ENCODE measurements at regions of chr18 and their contacts with region 1.

Region 1: DNA sequence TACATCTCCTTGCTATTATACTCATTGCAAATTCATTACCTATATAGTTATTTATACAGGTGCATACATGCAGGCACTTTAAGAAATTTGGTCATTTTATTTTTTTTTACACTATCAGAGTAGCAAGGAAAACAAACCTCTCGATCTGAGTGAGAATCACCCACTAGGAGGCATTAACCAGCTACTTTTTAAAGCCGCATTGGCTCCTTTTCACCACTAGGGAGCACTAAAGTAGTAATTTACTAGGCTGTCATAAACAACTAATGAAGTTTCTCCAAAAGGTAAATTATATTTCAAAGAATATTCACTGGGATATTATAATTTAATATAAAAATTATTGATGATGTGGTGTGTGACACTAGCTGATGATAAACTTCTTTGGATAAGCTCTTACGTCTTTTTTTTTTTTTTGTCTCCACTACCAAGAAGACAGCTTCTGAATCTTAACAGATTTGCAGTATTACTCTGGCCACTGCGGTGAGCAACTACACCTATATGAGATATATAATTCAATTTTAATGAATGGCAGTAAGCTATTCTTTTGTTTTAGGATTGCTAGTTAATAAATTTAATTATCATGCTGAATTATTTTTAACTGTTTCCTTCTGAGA is 101.9 kb downstream of the NOL4 start:
- DNase-seq: peak; percentile 80
- H3K4me3 ChIP-seq: no peak overlapping the region
- H3K27ac ChIP-seq: no peak overlapping the region
- H3K4me1 ChIP-seq: peaks cover 76% of the 10 kb centered on the region
- H3K27me3 ChIP-seq: no peaks in the 10 kb centered on the region
- CTCF ChIP-seq: peak; percentile 99

Region 2: GRCh38 chr18:33751613-33752221 is 371.1 kb before region 1 on chr18:
- CTCF ChIA-PET with region 1: no interaction called
- POLR2A ChIA-PET with region 1: no interaction called
- intact Hi-C with region 1: loop called (anchors 5 kb)
- DNase-seq: peak; percentile 16
- H3K4me3 ChIP-seq: no peak overlapping the region
- H3K27ac ChIP-seq: no peak overlapping the region
- H3K4me1 ChIP-seq: no peaks in the 10 kb centered on the region
- H3K27me3 ChIP-seq: no peaks in the 10 kb centered on the region
- CTCF ChIP-seq: peak; percentile 65

Region 3: GRCh38 chr18:33839441-33840211 is 283.2 kb before region 1 on chr18:
- CTCF ChIA-PET with region 1: interaction called, 17 read pairs
- POLR2A ChIA-PET with region 1: no interaction called
- intact Hi-C with region 1: loop called (anchors 2 kb)
- DNase-seq: peak; percentile 84
- H3K4me3 ChIP-seq: no peak overlapping the region
- H3K27ac ChIP-seq: no peak overlapping the region
- H3K4me1 ChIP-seq: peaks cover 18% of the 10 kb centered on the region
- H3K27me3 ChIP-seq: no peaks in the 10 kb centered on the region
- CTCF ChIP-seq: peak; percentile 87

Region 4: DNA sequence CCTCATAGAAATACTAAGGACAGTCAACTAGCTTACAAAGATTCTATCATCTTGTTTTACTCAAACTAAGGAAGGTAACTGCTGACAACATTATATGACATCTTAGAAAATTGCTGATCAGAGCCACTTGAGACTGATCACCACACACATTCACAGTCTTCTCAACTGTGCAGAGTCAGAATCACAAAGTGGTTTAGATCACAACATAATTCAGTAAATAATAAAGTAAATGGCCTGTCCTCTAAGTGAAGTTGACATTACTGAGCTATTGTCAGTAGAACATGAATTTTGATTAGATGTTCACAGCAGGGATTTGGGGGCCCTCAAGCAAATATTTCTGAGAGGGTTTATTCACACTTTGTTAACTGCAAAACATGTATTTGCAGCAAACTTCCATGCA is 73.4 kb after region 1 on chr18:
- CTCF ChIA-PET with region 1: interaction called, 4 read pairs
- POLR2A ChIA-PET with region 1: no interaction called
- intact Hi-C with region 1: loop called (anchors 5 kb)
- DNase-seq: peak; percentile 70
- H3K4me3 ChIP-seq: no peak overlapping the region
- H3K27ac ChIP-seq: peak overlapping the region; percentile 80
- H3K4me1 ChIP-seq: peaks cover 78% of the 10 kb centered on the region
- H3K27me3 ChIP-seq: no peaks in the 10 kb centered on the region
- CTCF ChIP-seq: no peak

Region 5: GRCh38 chr18:34224423-34225217 is 101.8 kb after region 1 on chr18 and contains the start of gene NOL4:
- CTCF ChIA-PET with region 1: interaction called, 9 read pairs
- POLR2A ChIA-PET with region 1: no interaction called
- intact Hi-C with region 1: loop called (anchors 2 kb)
- DNase-seq: peak; percentile 95
- H3K4me3 ChIP-seq: peak within 1 kb of the TSS; percentile 67
- H3K27ac ChIP-seq: peak within 1 kb of the TSS; percentile 69
- H3K4me1 ChIP-seq: peaks cover 4% of the 10 kb centered on the region
- H3K27me3 ChIP-seq: peaks cover 13% of the 10 kb centered on the region
- CTCF ChIP-seq: peak; percentile 41
- total RNA-seq, gene NOL4: 34.4 and 36.7 TPM in 2 replicates

Region 6: DNA sequence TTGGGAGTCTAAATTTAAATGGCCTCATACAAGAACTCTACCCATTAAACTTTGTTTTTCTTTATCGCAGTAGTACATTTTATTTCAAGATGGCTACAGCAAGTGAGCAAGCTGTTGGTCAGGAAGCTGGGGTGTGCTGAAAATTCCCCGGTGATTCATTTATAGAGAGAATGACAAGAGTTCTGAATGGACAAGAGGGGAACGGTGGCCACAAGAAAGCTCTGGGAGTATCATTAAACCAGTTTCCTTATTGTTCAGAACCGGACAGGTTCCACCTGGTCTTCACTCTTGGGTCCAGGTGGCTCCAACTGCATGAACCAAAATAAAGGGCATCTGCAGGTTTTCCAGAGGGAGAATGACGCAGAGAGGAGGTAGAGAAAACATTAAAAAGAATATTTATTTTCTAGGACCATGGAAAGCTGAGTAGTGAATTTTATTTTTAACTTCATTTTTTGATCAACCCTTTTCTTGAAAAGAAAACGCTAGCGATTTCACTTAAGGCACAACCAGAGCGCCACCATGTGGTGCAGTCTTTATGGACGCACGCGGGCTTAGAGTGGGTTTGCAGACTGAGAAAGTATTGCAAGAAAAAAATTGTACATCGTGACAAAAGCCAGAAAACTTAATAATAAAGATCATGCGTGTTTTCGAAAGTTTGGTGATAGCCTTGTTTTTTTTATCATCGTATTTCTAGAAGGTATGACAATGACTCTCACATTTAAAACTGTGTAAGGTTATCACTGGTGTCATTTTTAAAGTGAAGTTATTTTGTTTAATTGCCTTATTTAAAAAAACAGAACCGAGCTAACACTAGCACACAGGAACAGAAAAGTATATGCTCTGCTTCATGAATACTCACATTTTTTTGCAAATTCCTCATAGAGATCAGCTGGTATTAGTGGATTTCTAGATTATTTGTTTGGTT is 199.8 kb after region 1 on chr18:
- CTCF ChIA-PET with region 1: interaction called, 11 read pairs
- POLR2A ChIA-PET with region 1: no interaction called
- intact Hi-C with region 1: loop called (anchors 2 kb)
- DNase-seq: peak; percentile 87
- H3K4me3 ChIP-seq: no peak overlapping the region
- H3K27ac ChIP-seq: no peak overlapping the region
- H3K4me1 ChIP-seq: peaks cover 4% of the 10 kb centered on the region
- H3K27me3 ChIP-seq: no peaks in the 10 kb centered on the region
- CTCF ChIP-seq: peak; percentile 95

Region 7: DNA sequence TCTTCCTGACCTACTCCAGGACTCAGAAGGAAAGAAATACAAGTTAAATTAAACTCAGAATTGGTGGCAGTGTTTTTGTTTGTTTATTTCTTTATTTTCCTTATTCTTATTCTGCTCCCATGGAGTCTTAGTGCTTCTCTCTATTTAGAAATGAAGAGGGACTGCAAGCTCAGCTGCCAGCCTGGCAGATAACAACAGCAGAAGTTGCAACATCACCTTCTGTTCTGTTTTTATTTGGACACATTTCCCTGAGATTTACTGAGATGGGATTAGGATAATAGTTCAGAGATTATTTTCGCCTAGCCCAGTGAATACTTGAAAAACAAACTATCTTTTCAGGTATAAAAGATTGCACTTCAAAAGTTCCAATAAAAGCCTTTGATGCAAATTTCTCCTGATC is 516.9 kb after region 1 on chr18:
- CTCF ChIA-PET with region 1: no interaction called
- POLR2A ChIA-PET with region 1: no interaction called
- intact Hi-C with region 1: loop called (anchors 10 kb)
- DNase-seq: no peak
- H3K4me3 ChIP-seq: no peak overlapping the region
- H3K27ac ChIP-seq: no peak overlapping the region
- H3K4me1 ChIP-seq: no peaks in the 10 kb centered on the region
- H3K27me3 ChIP-seq: no peaks in the 10 kb centered on the region
- CTCF ChIP-seq: no peak